Activated naive CD4-positive, alpha-beta T cell treated with anti-CD3 and anti-CD28 coated beads for 36 hours (primary cell): ENCODE measurements at regions of chr6 and their contacts with region 1.

Region 1: DNA sequence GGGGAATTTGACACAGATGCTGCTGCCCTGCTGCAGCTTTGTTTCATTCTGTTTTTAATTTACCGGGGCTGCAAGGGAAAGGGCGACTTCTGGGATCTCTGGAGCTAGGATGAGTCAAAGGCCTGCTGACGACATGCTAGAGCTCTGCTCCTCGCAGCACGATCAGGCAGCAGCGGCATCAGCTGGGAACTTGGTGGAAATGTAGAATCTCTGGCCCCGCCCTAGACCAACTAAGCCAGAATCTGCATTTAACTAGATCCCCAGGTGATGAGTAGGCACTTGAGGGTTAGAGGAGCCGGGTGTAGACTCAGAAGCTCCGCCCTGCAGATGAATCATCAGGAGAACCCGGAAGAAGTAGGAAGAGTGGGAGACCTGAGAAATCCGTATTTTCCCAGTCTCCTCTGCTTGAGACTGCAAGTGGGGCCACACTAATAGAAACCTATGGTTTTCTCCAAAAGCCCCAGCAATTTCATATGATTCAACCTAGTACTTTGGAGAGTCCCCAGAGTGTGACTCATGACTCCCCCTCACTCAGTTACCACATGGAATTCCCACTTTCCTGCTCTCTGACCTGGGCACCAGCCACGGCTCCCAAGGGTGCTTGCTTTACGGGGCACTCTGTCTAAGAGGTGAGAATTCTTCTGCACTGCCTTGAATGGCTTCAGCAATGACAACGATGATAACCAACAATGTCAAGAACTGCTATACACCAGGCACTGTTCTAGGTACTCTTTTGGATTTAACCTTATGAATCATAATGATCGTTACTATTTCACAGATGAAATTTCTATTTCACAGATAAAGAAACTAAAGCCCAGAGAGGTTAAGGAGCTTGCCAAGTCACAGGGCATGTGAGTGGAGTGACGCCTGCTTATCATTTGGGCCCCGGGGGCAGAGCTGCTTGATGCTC is 18.1 kb downstream of the TUBB2B start:
- DNase-seq: peak; percentile 81
- H3K4me3 Mint-ChIP-seq: peak overlapping the region; percentile 13
- H3K27ac Mint-ChIP-seq: peak overlapping the region; percentile 88
- H3K4me1 Mint-ChIP-seq: peaks cover 23% of the 10 kb centered on the region
- H3K27me3 Mint-ChIP-seq: peaks cover 39% of the 10 kb centered on the region

Region 2: GRCh38 chr6:2111162-2111677 is 1098.1 kb before region 1 on chr6:
- CTCF ChIA-PET with region 1: no interaction called
- intact Hi-C with region 1: loop called (anchors 1 kb)
- DNase-seq: peak; percentile 14
- H3K4me3 Mint-ChIP-seq: peak overlapping the region; percentile 45
- H3K27ac Mint-ChIP-seq: peak overlapping the region; percentile 88
- H3K4me1 Mint-ChIP-seq: peaks cover 36% of the 10 kb centered on the region
- H3K27me3 Mint-ChIP-seq: no peaks in the 10 kb centered on the region

Region 3: DNA sequence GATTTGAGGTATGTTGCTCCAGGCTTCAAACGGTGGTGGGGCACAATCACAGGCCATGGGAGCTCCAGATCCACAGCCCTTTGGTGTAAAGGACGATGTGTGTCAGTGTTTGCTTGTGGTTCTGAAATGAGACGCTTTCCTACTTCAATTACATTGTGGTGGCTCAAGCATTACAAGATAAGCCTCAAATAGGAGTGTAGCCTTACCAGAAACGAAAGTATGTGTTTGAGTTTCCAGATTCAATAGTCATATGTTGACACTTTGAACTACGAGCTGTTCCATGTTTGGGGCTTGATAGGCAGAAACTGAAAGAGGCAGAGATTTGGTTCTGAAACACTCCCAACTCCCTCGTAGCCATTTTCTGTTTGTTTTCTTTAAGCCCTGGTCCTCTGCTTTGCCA is 645.7 kb before region 1 on chr6:
- CTCF ChIA-PET with region 1: no interaction called
- intact Hi-C with region 1: no loop called
- DNase-seq: peak; percentile 33
- H3K4me3 Mint-ChIP-seq: no peak overlapping the region
- H3K27ac Mint-ChIP-seq: no peak overlapping the region
- H3K4me1 Mint-ChIP-seq: peaks cover 10% of the 10 kb centered on the region
- H3K27me3 Mint-ChIP-seq: peaks cover 17% of the 10 kb centered on the region

Region 4: DNA sequence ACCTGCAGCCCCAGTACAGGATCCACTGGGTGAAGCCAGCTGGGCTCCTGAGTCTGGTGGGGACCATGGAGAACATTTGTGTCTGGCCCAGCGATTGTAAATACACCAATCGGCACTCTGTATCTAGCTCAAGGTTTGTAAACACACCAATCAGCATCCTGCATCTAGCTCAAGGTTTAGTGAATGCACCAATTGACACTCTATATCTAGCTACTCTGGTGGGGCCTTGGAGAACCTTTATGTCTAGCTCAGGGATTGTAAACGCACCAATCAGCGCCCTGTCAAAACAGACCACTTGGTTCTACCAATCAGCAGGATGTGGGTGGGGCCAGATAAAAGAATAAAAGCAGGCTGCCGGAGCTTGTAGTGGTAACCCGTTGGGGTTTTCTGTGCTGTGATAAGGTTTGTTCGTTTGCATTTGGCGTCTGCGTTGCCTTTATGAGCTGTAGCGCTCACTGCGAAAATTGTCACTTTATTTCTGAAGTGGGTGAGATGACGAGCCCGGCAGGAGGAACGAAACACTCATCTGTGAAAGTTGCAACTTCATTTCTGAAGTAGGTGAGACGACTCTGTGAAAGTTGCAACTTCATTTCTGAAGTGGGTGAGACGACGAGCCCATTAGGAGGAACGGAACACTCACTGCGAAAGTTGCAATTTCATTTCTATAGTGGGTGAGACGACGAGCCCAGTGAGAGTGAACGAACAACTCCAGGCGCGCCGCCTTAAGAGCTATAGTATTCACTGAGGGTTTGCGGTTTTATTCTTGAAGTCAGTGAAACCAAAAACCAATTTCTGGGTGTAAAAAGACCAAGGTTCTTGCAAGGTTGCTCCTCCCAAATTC is 269.1 kb before region 1 on chr6:
- CTCF ChIA-PET with region 1: no interaction called
- intact Hi-C with region 1: loop called (anchors 1 kb)
- DNase-seq: peak; percentile 95
- H3K4me3 Mint-ChIP-seq: peak overlapping the region; percentile 2
- H3K27ac Mint-ChIP-seq: peak overlapping the region; percentile 97
- H3K4me1 Mint-ChIP-seq: peaks cover 69% of the 10 kb centered on the region
- H3K27me3 Mint-ChIP-seq: no peaks in the 10 kb centered on the region

Region 5: DNA sequence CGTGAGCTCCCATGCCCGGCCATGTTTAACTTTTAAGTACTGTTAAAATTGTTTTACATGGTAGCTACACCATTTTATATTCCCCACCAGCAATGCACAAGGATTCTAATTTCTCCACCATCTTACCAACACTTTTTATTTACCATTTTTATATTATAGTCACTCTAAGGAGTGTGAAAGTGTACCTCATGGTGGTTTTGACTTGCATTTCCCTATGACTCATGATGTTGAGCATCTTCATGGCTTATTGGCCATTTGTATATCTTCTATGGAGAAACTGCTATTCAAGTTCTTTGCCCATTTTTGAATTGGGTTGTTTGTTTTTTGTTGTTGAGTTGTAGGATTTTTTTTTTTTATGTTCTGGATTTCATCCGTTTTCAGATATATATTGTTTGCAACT is 106.5 kb before region 1 on chr6:
- CTCF ChIA-PET with region 1: no interaction called
- intact Hi-C with region 1: no loop called
- DNase-seq: no peak
- H3K4me3 Mint-ChIP-seq: no peak overlapping the region
- H3K27ac Mint-ChIP-seq: no peak overlapping the region
- H3K4me1 Mint-ChIP-seq: peaks cover 4% of the 10 kb centered on the region
- H3K27me3 Mint-ChIP-seq: no peaks in the 10 kb centered on the region

Region 6: GRCh38 chr6:3118353-3119039 is 90.9 kb before region 1 on chr6 and contains the start of gene BPHL:
- CTCF ChIA-PET with region 1: no interaction called
- intact Hi-C with region 1: loop called (anchors 1 kb)
- DNase-seq: peak; percentile 99
- H3K4me3 Mint-ChIP-seq: peak within 1 kb of the TSS; percentile 83
- H3K27ac Mint-ChIP-seq: peak within 1 kb of the TSS; percentile 78
- H3K4me1 Mint-ChIP-seq: peaks cover 21% of the 10 kb centered on the region
- H3K27me3 Mint-ChIP-seq: no peaks in the 10 kb centered on the region
- total RNA-seq, gene BPHL: 6.9 to 7.5 TPM

Region 7: GRCh38 chr6:3162565-3163247 is 46.7 kb before region 1 on chr6:
- CTCF ChIA-PET with region 1: interaction called, 8 read pairs
- intact Hi-C with region 1: loop called (anchors 1 kb)
- DNase-seq: peak; percentile 57
- H3K4me3 Mint-ChIP-seq: peak overlapping the region; percentile 80
- H3K27ac Mint-ChIP-seq: no peak overlapping the region
- H3K4me1 Mint-ChIP-seq: peaks cover 24% of the 10 kb centered on the region
- H3K27me3 Mint-ChIP-seq: peaks cover 23% of the 10 kb centered on the region

Region 8: GRCh38 chr6:3251462-3252314 is 42.3 kb after region 1 on chr6:
- CTCF ChIA-PET with region 1: interaction called, 10 read pairs
- intact Hi-C with region 1: loop called (anchors 1 kb)
- DNase-seq: peak; percentile 88
- H3K4me3 Mint-ChIP-seq: no peak overlapping the region
- H3K27ac Mint-ChIP-seq: no peak overlapping the region
- H3K4me1 Mint-ChIP-seq: peaks cover 5% of the 10 kb centered on the region
- H3K27me3 Mint-ChIP-seq: peaks cover 15% of the 10 kb centered on the region